ENCODE measurements at regions of chr6 and their contacts with region 1.

Region 1: GRCh38 chr6:93419304-93420162 is at the start of gene EPHA7:
- DNase-seq: peak; percentile 91 to 92
- ATAC-seq: peak; percentile 94 to 100 (median 96)
- H3K4me3 ChIP-seq: peak within 1 kb of the TSS; percentile 46 to 65 (median 57)
- H3K27ac ChIP-seq: peak within 1 kb of the TSS in 8 of 10 donors; percentile 17 to 79 (median 51)
- H3K4me1 ChIP-seq: peaks cover 0 to 43% (median 28%) of the 10 kb centered on the region in 9 donors
- H3K27me3 ChIP-seq: peaks cover 0 to 83% (median 76%) of the 10 kb centered on the region in 7 donors
- CTCF ChIP-seq: no peak
- total RNA-seq, gene EPHA7: 0.22 to 15.1 (median 3.9) TPM

Region 2: GRCh38 chr6:92810913-92811312 is 608.6 kb before region 1 on chr6:
- intact Hi-C with region 1: loop called in 2 of 10 experiments (anchors 5 to 10 kb)
- DNase-seq: no peak
- ATAC-seq: no peak
- H3K4me3 ChIP-seq: no peak overlapping the region
- H3K27ac ChIP-seq: no peak overlapping the region
- H3K4me1 ChIP-seq: no peaks in the 10 kb centered on the region
- H3K27me3 ChIP-seq: no peaks in the 10 kb centered on the region
- CTCF ChIP-seq: peak in 7 of 9 donors; percentile 31 to 53 (median 44)

Region 3: DNA sequence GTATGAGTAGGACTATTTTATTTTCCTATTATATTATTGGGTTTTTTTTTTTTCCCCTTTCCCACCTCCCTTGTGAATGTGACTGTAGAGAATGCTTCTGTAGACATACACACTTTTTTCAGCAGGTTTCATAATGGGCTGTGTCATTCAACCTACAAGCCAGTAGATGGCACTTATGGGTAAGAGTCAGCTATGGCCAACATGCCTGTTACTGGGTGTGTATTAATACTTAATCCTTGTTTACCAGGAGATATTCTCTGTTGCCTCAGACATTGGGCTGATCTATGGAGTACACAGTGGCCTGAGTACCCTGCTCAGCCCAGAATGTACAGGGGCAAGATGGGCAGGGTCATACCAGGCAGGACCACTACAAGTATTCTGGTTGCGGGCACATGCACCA is 382.7 kb before region 1 on chr6:
- intact Hi-C with region 1: loop called in 1 of 10 experiments (anchors 5 kb)
- DNase-seq: no peak
- ATAC-seq: peak in 4 of 8 donors; percentile 24 to 44 (median 38)
- H3K4me3 ChIP-seq: no peak overlapping the region
- H3K27ac ChIP-seq: no peak overlapping the region
- H3K4me1 ChIP-seq: no peaks in the 10 kb centered on the region
- H3K27me3 ChIP-seq: no peaks in the 10 kb centered on the region
- CTCF ChIP-seq: peak in 6 of 9 donors; percentile 26 to 48 (median 36)

Region 4: GRCh38 chr6:93327857-93328256 is 91.7 kb before region 1 on chr6:
- intact Hi-C with region 1: no loop called
- DNase-seq: no peak
- ATAC-seq: peak in 4 of 8 donors; percentile 28 to 86 (median 63)
- H3K4me3 ChIP-seq: no peak overlapping the region
- H3K27ac ChIP-seq: no peak overlapping the region
- H3K4me1 ChIP-seq: no peaks in the 10 kb centered on the region
- H3K27me3 ChIP-seq: no peaks in the 10 kb centered on the region
- CTCF ChIP-seq: no peak

Region 5: DNA sequence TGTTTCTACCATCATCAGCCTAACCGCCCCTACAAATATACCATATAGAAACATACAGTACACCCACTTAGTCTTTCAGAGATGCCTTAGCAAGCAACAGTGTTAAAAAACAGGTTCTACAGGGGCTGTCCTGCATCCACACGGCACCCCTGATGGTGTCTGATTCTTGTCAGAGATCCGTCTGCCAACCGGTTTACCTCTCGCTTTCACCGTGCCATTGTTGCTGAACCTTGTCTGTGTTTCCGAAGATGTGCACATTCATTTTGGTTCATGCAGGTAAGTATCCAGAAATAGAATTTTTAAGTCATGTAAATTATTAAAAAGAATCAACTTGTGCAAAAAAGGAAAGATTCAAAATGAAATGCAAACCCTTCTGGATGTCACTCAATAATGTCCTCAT is 53.0 kb before region 1 on chr6:
- intact Hi-C with region 1: no loop called
- DNase-seq: no peak
- ATAC-seq: no peak
- H3K4me3 ChIP-seq: no peak overlapping the region
- H3K27ac ChIP-seq: no peak overlapping the region
- H3K4me1 ChIP-seq: no peaks in the 10 kb centered on the region
- H3K27me3 ChIP-seq: no peaks in the 10 kb centered on the region
- CTCF ChIP-seq: no peak

Region 6: GRCh38 chr6:93902517-93902916 is 483.0 kb after region 1 on chr6:
- intact Hi-C with region 1: no loop called
- DNase-seq: no peak
- ATAC-seq: no peak
- H3K4me3 ChIP-seq: no peak overlapping the region
- H3K27ac ChIP-seq: no peak overlapping the region
- H3K4me1 ChIP-seq: no peaks in the 10 kb centered on the region
- H3K27me3 ChIP-seq: no peaks in the 10 kb centered on the region
- CTCF ChIP-seq: no peak